ENCODE measurements at regions of chrX and their contacts with region 1.

Region 1: GRCh38 chrX:39268207-39268606 is 466.9 kb downstream of the MID1IP1 start:
- DNase-seq: no peak
- H3K4me3 Mint-ChIP-seq: peak overlapping the region; percentile 24
- H3K27ac Mint-ChIP-seq: peak overlapping the region; percentile 84
- H3K4me1 Mint-ChIP-seq: peaks cover 39% of the 10 kb centered on the region
- H3K27me3 Mint-ChIP-seq: no peaks in the 10 kb centered on the region

Region 2: GRCh38 chrX:39293203-39293602 is 25.0 kb after region 1 on chrX:
- intact Hi-C with region 1: loop called (anchors 2 kb)
- DNase-seq: no peak
- H3K4me3 Mint-ChIP-seq: peak overlapping the region; percentile 62
- H3K27ac Mint-ChIP-seq: peak overlapping the region; percentile 82
- H3K4me1 Mint-ChIP-seq: peaks cover 40% of the 10 kb centered on the region
- H3K27me3 Mint-ChIP-seq: no peaks in the 10 kb centered on the region

Measured in activated T-helper 1 cell treated with anti-CD3 and anti-CD28 coated beads, Interleukin-12 subunit alpha, Interleukin-12 subunit beta, Interleukin-2, Interleukin-4 antibody, amounts not matched to agents 30 ng/mL and 10 ng/mL and 1 ng/mL, durations not matched to agents 14 hours and 24 hours and 36 hours (primary cell).